Activated CD4-positive, alpha-beta T cell treated with anti-CD3 and anti-CD28 coated beads for 36 hours (primary cell): ENCODE measurements at regions of chr2 and their contacts with region 1.

Region 1: GRCh38 chr2:108583903-108584520 is 49.7 kb downstream of the LIMS1 start:
- DNase-seq: peak; percentile 69
- ATAC-seq: peak; percentile 73
- H3K4me3 Mint-ChIP-seq: no peak overlapping the region
- H3K27ac Mint-ChIP-seq: no peak overlapping the region
- H3K4me1 Mint-ChIP-seq: peaks cover 38% of the 10 kb centered on the region
- H3K27me3 Mint-ChIP-seq: no peaks in the 10 kb centered on the region

Region 2: GRCh38 chr2:107936433-107937359 is 647.3 kb before region 1 on chr2:
- CTCF ChIA-PET with region 1: interaction called, 4 read pairs
- POLR2A ChIA-PET with region 1: no interaction called
- intact Hi-C with region 1: loop called in 1 of 2 experiments (anchors 1 kb)
- DNase-seq: peak; percentile 34
- ATAC-seq: no peak
- H3K4me3 Mint-ChIP-seq: no peak overlapping the region
- H3K27ac Mint-ChIP-seq: no peak overlapping the region
- H3K4me1 Mint-ChIP-seq: no peaks in the 10 kb centered on the region
- H3K27me3 Mint-ChIP-seq: peaks cover 2% of the 10 kb centered on the region

Region 3: DNA sequence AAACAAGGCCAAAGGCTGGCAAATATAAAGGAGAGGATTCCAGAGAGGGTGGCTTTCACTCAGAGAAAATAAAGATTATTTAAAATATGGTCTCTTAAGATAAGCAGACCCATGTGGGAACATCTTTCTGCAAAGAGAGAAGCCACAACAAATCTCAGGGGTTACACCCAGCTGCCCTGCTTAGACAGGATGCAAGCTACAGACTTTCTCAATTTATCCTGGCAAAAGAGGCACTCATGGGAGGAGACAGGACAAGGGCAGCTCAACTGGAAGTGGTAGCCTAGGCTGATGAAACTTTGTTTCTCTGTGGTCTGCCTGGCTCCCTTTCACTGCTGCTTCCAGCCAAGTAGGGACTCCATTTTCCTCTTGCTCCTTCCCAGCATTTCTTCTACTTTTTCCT is 232.1 kb before region 1 on chr2:
- CTCF ChIA-PET with region 1: interaction called, 5 read pairs
- POLR2A ChIA-PET with region 1: no interaction called
- intact Hi-C with region 1: loop called (anchors 1 kb)
- DNase-seq: no peak
- ATAC-seq: no peak
- H3K4me3 Mint-ChIP-seq: no peak overlapping the region
- H3K27ac Mint-ChIP-seq: no peak overlapping the region
- H3K4me1 Mint-ChIP-seq: no peaks in the 10 kb centered on the region
- H3K27me3 Mint-ChIP-seq: peaks cover 8% of the 10 kb centered on the region

Region 4: DNA sequence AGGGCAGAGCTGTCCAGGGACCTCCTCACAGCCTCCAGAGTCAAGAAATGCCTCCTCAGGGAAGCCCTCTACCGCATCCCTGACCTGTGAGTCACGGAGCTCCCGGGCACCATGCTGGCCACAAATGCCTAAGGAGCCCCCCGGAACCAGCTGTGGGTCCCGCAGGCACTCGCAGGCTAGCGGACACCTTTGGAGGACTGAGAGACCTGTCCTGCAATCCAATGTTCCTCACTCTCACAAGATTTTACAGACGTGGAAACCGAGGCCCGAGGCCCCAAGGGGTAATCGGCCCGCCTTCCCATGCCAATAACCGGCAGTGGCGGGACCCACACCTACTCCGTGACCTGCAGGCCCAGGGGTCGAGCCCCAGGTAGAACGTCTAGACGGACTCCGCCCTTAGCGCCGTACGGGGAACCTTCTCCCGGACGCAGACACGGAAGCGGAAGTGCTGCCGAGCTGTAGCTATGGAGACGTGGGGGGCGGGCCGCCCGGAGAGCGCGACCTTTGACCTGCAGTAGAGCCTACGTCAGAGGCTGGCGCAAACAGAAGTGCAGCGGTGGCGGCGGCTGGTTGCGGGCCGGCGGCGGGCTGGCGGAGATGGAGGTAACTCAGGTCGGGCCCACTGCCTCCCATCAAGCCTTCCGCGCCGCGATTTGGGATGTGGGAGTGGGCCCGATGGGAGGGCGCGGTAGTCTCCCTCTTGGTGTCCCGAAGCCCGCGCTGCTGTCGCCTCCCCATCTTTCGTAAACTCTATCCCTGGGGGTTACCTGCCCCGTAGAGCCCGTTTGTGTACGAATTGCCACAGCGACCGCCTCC is 135.1 kb before region 1 on chr2 and contains the start of gene GCC2:
- CTCF ChIA-PET with region 1: interaction called, 4 read pairs
- POLR2A ChIA-PET with region 1: interaction called, 11 read pairs
- intact Hi-C with region 1: loop called (anchors 1 to 5 kb)
- DNase-seq: peak; percentile 98
- ATAC-seq: peak; percentile 97
- H3K4me3 Mint-ChIP-seq: peak within 1 kb of the TSS; percentile 98
- H3K27ac Mint-ChIP-seq: peak within 1 kb of the TSS; percentile 94
- H3K4me1 Mint-ChIP-seq: peaks cover 33% of the 10 kb centered on the region
- H3K27me3 Mint-ChIP-seq: no peaks in the 10 kb centered on the region
- total RNA-seq, gene GCC2: 47.8 to 51.3 TPM

Region 5: GRCh38 chr2:108533832-108534583 is 50.0 kb before region 1 on chr2 and contains the start of gene LIMS1:
- CTCF ChIA-PET with region 1: interaction called, 4 read pairs
- POLR2A ChIA-PET with region 1: no interaction called
- intact Hi-C with region 1: loop called (anchors 1 to 2 kb)
- DNase-seq: peak; percentile 95
- ATAC-seq: peak; percentile 89
- H3K4me3 Mint-ChIP-seq: peak within 1 kb of the TSS; percentile 89
- H3K27ac Mint-ChIP-seq: peak within 1 kb of the TSS; percentile 89
- H3K4me1 Mint-ChIP-seq: peaks cover 44% of the 10 kb centered on the region
- H3K27me3 Mint-ChIP-seq: no peaks in the 10 kb centered on the region
- total RNA-seq, gene LIMS1: 47.5 to 70.3 TPM

Region 6: GRCh38 chr2:109005686-109006204 is 421.7 kb after region 1 on chr2:
- CTCF ChIA-PET with region 1: no interaction called
- POLR2A ChIA-PET with region 1: no interaction called
- intact Hi-C with region 1: no loop called
- DNase-seq: no peak
- ATAC-seq: no peak
- H3K4me3 Mint-ChIP-seq: no peak overlapping the region
- H3K27ac Mint-ChIP-seq: no peak overlapping the region
- H3K4me1 Mint-ChIP-seq: peaks cover 15% of the 10 kb centered on the region
- H3K27me3 Mint-ChIP-seq: no peaks in the 10 kb centered on the region